Activated CD4-positive, alpha-beta T cell treated with anti-CD3 and anti-CD28 coated beads, Interleukin-2, amount 10 ng/mL, durations not matched to agents 24 days and 14 days (primary cell): ENCODE measurements at regions of chr13 and their contacts with region 1.

Region 1: DNA sequence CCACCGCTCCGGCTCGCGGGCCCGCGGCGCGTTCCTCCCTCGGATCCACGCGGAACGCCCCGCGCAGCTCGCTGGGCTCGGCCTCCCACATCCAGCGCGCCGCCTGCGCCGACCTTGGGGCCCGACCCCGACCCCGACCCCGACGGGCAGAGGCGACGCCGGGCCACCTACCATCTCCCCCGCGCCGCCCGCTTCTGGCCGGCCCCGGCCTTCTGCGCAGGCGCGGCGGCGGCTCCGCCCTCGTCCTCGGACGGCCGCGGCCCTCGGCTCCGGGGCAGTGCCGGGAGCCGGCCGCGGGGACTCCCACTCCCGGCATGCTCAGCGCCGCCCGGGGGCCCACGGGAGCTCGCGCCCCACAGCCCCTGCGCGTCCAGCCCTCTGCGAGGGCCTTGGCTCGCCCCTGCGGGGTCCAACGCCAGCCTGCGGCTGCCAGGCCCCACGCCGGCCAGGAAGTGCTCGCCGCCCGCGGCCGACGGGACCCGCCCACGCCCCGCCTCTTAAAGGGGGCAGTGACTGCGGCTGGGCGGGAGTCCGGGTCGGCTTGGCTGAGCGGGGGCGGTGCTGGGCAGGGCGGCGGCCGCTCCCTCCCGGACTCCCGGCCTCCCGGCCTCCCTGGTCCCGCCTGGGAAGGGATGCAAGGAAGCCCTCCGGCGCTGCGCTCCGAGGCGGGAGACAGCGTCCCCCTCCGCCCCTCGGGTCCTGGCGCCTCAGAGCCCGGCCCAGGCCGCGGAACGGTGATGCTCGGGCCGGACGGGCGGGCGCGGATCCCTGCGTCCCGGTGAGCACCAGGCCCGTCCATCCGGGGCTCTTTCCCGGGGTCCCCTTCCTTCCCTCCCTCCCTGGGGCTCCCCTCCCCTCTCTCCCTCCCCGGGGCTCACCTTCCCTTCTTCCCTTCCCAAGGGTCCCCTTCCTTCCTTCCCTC is at the start of gene DCUN1D2:
- DNase-seq: peak; percentile 96
- H3K4me3 Mint-ChIP-seq: peak within 1 kb of the TSS; percentile 93
- H3K27ac Mint-ChIP-seq: peak within 1 kb of the TSS; percentile 89
- H3K4me1 Mint-ChIP-seq: peaks cover 49% of the 10 kb centered on the region
- H3K27me3 Mint-ChIP-seq: no peaks in the 10 kb centered on the region
- total RNA-seq, gene DCUN1D2: 21.4 and 29.9 TPM in 2 replicates

Region 2: DNA sequence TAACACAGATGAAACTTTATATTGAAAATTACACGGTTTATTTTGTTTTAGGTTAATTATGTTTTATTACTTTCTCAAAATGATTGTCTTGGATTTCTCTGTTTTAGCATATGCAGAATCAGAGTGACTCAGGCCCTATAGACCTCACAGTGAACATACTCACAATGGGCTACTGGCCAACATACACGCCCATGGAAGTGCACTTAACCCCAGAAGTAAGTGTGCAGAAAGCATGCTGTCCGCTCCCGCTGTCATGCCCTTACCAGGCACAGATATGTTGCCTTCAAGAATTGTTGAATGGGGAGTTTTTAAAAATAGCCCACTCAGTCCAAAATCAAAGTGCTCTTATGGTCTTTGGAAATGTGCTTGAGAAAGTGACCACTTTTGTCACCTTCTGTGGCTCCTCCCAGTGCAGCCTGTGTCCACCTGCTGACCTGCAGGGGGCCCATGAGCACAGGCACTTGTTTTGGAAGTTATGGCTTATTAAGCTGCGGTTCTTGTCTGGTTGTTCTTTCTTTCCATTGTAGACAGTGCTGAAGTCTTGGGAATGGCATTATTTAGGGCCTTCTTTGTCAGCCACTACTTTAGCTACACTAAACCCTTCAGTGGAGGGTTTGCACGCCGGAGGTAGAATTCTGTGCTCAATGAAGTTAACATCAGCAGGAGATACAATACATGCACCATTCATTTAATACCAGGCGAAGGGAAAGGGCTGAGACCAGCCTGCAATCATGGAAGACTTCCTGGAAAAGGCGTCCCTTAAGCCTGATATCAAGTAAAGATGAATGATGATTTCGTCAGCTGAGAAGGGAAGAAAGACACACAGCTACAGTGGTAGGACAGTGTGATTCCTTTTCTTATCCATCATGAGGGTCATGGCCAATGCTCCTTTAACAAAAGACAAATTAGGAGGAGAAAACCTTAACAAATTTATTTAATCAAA is 244.6 kb before region 1 on chr13:
- intact Hi-C with region 1: no loop called
- DNase-seq: no peak
- H3K4me3 Mint-ChIP-seq: no peak overlapping the region
- H3K27ac Mint-ChIP-seq: no peak overlapping the region
- H3K4me1 Mint-ChIP-seq: no peaks in the 10 kb centered on the region
- H3K27me3 Mint-ChIP-seq: no peaks in the 10 kb centered on the region

Region 3: GRCh38 chr13:113296842-113297369 is 193.9 kb before region 1 on chr13 and contains the start of gene LAMP1:
- intact Hi-C with region 1: loop called (anchors 1 kb)
- DNase-seq: peak; percentile 100
- H3K4me3 Mint-ChIP-seq: peak within 1 kb of the TSS; percentile 97
- H3K27ac Mint-ChIP-seq: peak within 1 kb of the TSS; percentile 98
- H3K4me1 Mint-ChIP-seq: peaks cover 27% of the 10 kb centered on the region
- H3K27me3 Mint-ChIP-seq: peaks cover 32% of the 10 kb centered on the region
- total RNA-seq, gene LAMP1: 55.3 and 57.5 TPM in 2 replicates

Region 4: DNA sequence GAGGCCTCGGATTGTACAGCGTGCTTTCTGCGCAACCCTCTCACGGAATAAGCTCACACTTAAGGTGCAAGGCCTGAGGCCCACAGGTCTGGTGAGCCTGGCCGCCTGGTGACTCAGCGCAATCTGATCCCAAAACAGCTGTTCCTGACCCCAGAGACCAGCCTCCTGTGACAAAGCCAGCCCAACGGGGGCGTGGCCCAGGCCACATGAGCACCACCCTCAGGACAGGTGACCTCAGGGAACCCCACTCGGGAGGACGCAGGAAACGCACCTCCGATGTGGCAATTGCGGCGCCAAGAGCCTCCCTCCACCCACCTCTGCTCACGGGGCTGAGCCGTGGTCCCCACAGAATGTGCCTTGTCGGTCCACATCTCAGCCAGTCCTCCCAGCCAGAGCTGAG is 153.2 kb before region 1 on chr13:
- intact Hi-C with region 1: no loop called
- DNase-seq: no peak
- H3K4me3 Mint-ChIP-seq: no peak overlapping the region
- H3K27ac Mint-ChIP-seq: no peak overlapping the region
- H3K4me1 Mint-ChIP-seq: no peaks in the 10 kb centered on the region
- H3K27me3 Mint-ChIP-seq: no peaks in the 10 kb centered on the region

Region 5: DNA sequence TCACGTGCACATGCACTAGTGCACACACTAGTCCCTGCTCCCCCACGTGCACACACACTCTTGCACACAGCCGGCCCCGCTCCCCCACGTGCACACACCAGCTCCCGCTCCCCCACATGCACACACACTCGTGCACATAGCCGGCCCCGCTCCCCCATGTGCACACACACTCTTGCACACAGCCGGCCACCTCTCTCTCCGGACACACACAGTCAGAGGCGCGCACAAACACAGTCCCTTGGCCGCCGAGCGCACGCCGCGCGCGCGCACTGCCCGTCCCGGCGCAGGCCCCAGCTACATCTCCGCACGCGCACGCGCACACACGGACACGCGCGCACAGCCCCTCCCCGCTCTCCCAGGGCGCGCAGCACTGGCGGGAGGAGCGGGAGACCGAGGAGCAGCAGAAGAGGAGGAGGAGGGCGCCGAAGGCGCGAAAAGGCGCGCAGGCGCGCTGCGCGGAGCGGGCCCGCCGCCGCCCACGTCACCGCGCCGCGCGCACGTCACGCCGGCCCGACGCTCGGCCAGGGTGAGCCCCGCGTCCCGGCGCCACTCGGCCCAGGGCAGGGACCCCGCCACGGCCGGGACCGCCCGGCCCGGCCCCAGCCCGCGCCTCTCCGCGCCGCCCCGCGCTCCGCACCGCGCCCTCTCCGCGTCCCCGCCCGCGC is 93.6 kb after region 1 on chr13 and contains the start of gene TFDP1:
- intact Hi-C with region 1: loop called (anchors 2 kb)
- DNase-seq: peak; percentile 96
- H3K4me3 Mint-ChIP-seq: peak within 1 kb of the TSS; percentile 97
- H3K27ac Mint-ChIP-seq: peak within 1 kb of the TSS; percentile 94
- H3K4me1 Mint-ChIP-seq: peaks cover 30% of the 10 kb centered on the region
- H3K27me3 Mint-ChIP-seq: peaks cover 3% of the 10 kb centered on the region
- total RNA-seq, gene TFDP1: 180 and 184 TPM in 2 replicates